A673 (cell line): ENCODE measurements at regions of chrX and their contacts with region 1.

Region 1: GRCh38 chrX:1154001-1154400 is 58.4 kb downstream of the CRLF2 start:
- DNase-seq: no peak
- H3K4me3 ChIP-seq: no peak overlapping the region
- H3K27ac ChIP-seq: no peak overlapping the region
- H3K4me1 ChIP-seq: no peaks in the 10 kb centered on the region
- H3K27me3 ChIP-seq: no peaks in the 10 kb centered on the region
- CTCF ChIP-seq: no peak

Region 2: GRCh38 chrX:427812-428725 is 725.9 kb before region 1 on chrX:
- CTCF ChIA-PET with region 1: no interaction called
- POLR2A ChIA-PET with region 1: no interaction called
- intact Hi-C with region 1: loop called (anchors 10 kb)
- DNase-seq: peak; percentile 59
- H3K4me3 ChIP-seq: peak overlapping the region; percentile 28
- H3K27ac ChIP-seq: no peak overlapping the region
- H3K4me1 ChIP-seq: no peaks in the 10 kb centered on the region
- H3K27me3 ChIP-seq: peaks cover 11% of the 10 kb centered on the region
- CTCF ChIP-seq: peak; percentile 43

Region 3: GRCh38 chrX:1062351-1062750 is 91.7 kb before region 1 on chrX:
- CTCF ChIA-PET with region 1: no interaction called
- POLR2A ChIA-PET with region 1: no interaction called
- intact Hi-C with region 1: no loop called
- DNase-seq: no peak
- H3K4me3 ChIP-seq: no peak overlapping the region
- H3K27ac ChIP-seq: no peak overlapping the region
- H3K4me1 ChIP-seq: no peaks in the 10 kb centered on the region
- H3K27me3 ChIP-seq: no peaks in the 10 kb centered on the region
- CTCF ChIP-seq: no peak

Region 4: DNA sequence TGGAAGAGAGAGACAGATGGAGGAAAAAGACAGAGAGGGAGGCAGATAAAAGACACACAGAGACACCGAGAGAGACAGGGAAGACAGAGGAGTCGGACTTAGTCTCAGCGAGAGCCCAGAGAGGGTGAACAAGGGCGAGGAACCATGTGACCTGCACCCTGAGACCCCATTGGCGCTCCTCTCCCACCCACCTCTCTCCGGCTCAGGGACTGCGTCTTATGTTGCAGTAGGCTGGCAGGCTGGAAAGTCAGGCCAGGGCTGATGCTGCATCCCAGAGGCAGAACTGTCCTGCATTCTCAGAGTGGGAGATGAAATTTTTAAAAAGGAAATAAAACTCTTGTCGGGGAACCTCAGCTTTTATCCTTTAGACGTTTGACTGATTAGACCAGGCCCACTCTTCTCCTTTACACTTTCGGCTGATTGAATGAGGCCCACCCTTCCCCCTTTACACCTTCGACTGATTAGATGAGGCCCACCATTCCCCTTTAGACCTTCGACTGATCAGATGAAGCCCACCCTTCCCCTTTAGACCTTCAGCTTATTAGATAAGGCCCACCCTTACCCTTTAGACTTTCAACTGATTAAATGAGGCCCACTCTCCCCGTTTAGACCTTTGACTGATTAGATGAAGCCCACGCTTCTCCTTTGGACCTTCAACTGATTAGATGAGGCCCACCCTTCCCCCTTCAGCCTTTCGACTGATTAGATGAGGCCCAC is 153.1 kb after region 1 on chrX:
- CTCF ChIA-PET with region 1: no interaction called
- POLR2A ChIA-PET with region 1: no interaction called
- intact Hi-C with region 1: no loop called
- DNase-seq: no peak
- H3K4me3 ChIP-seq: no peak overlapping the region
- H3K27ac ChIP-seq: no peak overlapping the region
- H3K4me1 ChIP-seq: no peaks in the 10 kb centered on the region
- H3K27me3 ChIP-seq: no peaks in the 10 kb centered on the region
- CTCF ChIP-seq: no peak

Region 5: GRCh38 chrX:2134782-2135181 is 980.8 kb after region 1 on chrX:
- CTCF ChIA-PET with region 1: no interaction called
- POLR2A ChIA-PET with region 1: no interaction called
- intact Hi-C with region 1: no loop called
- DNase-seq: no peak
- H3K4me3 ChIP-seq: no peak overlapping the region
- H3K27ac ChIP-seq: no peak overlapping the region
- H3K4me1 ChIP-seq: no peaks in the 10 kb centered on the region
- H3K27me3 ChIP-seq: no peaks in the 10 kb centered on the region
- CTCF ChIP-seq: no peak